IMR-90 (cell line): ENCODE measurements at regions of chrX and their contacts with region 1.

Region 1: GRCh38 chrX:40097497-40098263 is at the start of gene BCOR:
- DNase-seq: peak; percentile 58
- ATAC-seq: peak; percentile 36
- H3K4me3 ChIP-seq: peak within 1 kb of the TSS; percentile 86
- H3K27ac ChIP-seq: peak within 1 kb of the TSS; percentile 66
- H3K4me1 ChIP-seq: peaks cover 3% of the 10 kb centered on the region
- H3K27me3 ChIP-seq: no peaks in the 10 kb centered on the region; the same call in 1 of the 2 replicates
- CTCF ChIP-seq: no peak
- POLR2A ChIP-seq: peak; percentile 86
- RAD21 ChIP-seq: no peak
- total RNA-seq, gene BCOR: 7.5 and 8.9 TPM in 2 replicates

Region 2: DNA sequence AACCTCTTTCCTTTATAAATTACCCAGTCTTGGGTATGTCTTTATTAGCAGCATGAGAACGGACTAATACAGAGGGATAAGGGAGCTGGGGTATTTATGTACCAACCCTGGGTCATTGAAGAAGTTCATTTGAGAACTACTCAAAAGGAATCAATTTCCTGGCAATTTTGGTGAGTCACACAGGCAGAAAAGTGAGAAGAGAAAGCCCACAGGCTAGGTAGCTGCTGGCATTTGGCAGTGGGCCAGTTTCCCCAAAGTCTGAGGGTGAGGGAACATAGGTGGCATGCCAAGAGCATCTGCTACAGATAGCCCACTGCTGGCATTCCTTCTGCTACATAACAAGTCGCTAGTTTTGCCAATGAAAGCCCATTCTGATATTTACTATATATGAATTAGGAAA is 885.2 kb before region 1 on chrX:
- CTCF ChIA-PET with region 1: no interaction called
- POLR2A ChIA-PET with region 1: no interaction called
- dilution Hi-C with region 1: no loop called
- in situ Hi-C with region 1: no loop called
- intact Hi-C with region 1: no loop called
- DNase-seq: no peak
- ATAC-seq: no peak
- H3K4me3 ChIP-seq: no peak overlapping the region
- H3K27ac ChIP-seq: no peak overlapping the region
- H3K4me1 ChIP-seq: no peaks in the 10 kb centered on the region
- H3K27me3 ChIP-seq: peaks cover 9% of the 10 kb centered on the region
- CTCF ChIP-seq: no peak
- POLR2A ChIP-seq: no peak
- RAD21 ChIP-seq: no peak

Region 3: GRCh38 chrX:39652336-39653131 is 445.1 kb before region 1 on chrX:
- CTCF ChIA-PET with region 1: no interaction called
- POLR2A ChIA-PET with region 1: no interaction called
- dilution Hi-C with region 1: no loop called
- in situ Hi-C with region 1: no loop called
- intact Hi-C with region 1: loop called (anchors 10 kb)
- DNase-seq: peak; percentile 14
- ATAC-seq: no peak
- H3K4me3 ChIP-seq: no peak overlapping the region
- H3K27ac ChIP-seq: no peak overlapping the region
- H3K4me1 ChIP-seq: no peaks in the 10 kb centered on the region
- H3K27me3 ChIP-seq: peaks cover 42% of the 10 kb centered on the region
- CTCF ChIP-seq: peak; percentile 39
- POLR2A ChIP-seq: no peak
- RAD21 ChIP-seq: peak; percentile 44

Region 4: DNA sequence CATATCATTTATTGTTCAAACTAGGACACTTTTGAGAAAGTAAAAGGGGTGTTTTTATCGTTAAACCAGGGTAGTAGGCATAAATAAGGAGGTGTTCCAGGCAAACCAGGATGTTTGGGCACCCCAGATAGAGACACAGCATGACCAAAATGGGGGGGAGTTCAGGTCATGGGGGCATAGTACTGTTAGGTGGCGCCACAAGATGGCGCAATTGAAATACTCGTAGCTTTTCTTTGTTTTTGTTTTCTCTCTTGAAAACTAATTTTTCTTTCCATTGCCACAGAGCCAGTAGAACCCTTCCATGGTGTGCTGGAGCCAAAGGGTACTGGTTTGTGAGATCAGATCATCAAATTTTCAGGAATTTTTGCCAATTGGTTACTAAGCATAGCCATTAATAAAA is 283.3 kb before region 1 on chrX:
- CTCF ChIA-PET with region 1: no interaction called
- POLR2A ChIA-PET with region 1: no interaction called
- dilution Hi-C with region 1: no loop called
- in situ Hi-C with region 1: no loop called
- intact Hi-C with region 1: loop called (anchors 1 kb)
- DNase-seq: peak; percentile 23
- ATAC-seq: peak; percentile 13; the same call in 1 of the 2 replicates
- H3K4me3 ChIP-seq: no peak overlapping the region
- H3K27ac ChIP-seq: no peak overlapping the region
- H3K4me1 ChIP-seq: peaks cover 3% of the 10 kb centered on the region; the same call in 1 of the 2 replicates
- H3K27me3 ChIP-seq: peaks cover 4% of the 10 kb centered on the region; the same call in 1 of the 2 replicates
- CTCF ChIP-seq: peak; percentile 47
- POLR2A ChIP-seq: no peak
- RAD21 ChIP-seq: peak; percentile 61